Dorsolateral prefrontal cortex (tissue), 120 donors: ENCODE measurements at regions of chr3 and their contacts with region 1.

Region 1: DNA sequence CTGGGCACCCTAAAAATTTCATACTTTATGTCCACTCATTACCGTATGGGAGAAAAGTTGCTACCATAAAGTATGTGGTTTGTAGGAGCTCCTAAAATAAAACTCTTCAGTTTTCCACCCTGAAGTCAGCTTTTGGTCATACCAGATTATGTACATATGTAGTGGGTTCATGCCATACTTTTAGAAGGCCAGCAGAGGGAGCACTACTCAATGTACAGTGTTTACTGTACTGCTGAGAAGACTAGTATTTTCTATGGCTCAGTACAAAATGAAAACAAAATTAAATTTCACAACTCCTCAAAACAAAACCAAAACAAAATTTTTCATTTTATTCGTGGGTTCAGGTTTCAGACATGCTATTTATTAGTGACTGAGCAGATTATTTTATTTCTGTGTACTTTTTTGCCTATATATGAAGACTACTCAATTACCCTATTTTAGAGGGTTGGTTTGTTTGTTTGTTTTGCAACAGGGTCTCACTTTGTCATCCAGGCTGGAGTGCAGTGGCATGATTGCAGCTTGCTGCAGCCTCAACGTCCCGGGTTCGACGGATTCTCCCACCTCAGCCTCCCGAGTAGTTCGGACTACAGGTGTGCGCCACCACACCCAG is 24.3 kb downstream of the NXPE3 start:
- DNase-seq: peak in 3 of 10 donors; percentile 54 to 69 (median 60)
- H3K4me3 ChIP-seq: no peak overlapping the region
- H3K27ac ChIP-seq: peak overlapping the region in 30 of 59 donors; percentile 3 to 86 (median 50)
- H3K27me3 ChIP-seq: no peaks in the 10 kb centered on the region
- CTCF ChIP-seq: peak; percentile 69 to 95 (median 85)

Region 2: GRCh38 chr3:101724329-101725193 is 78.7 kb before region 1 on chr3 and contains the start of gene CEP97:
- intact Hi-C with region 1: loop called in 1 of 2 experiments (anchors 2 kb)
- DNase-seq: peak; percentile 86 to 98 (median 94)
- H3K4me3 ChIP-seq: peak within 1 kb of the TSS; percentile 67 to 100 (median 88)
- H3K27ac ChIP-seq: peak within 1 kb of the TSS; percentile 12 to 100 (median 95)
- H3K27me3 ChIP-seq: no peaks in the 10 kb centered on the region
- CTCF ChIP-seq: peak in 29 of 56 donors; percentile 4 to 54 (median 23)
- total RNA-seq, gene CEP97: 19.1 to 55.5 (median 35.0) TPM

Region 3: DNA sequence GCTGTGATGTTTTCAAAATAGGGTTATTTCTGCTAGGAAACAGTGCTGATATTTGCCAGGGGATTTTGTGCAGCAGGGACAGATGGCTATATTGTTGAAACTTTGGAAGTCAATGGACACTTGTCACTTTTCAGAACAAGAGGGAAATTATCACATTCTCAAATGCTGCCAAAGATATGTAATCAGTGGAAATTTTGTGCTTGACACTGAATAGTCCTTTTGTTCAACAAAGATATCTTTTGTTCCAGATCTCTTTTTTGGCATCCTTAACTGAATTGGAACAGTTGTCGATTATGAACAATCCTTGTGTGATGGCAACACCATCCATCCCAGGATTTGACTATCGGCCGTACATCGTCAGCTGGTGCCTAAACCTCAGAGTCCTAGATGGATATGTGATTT is 71.0 kb before region 1 on chr3:
- intact Hi-C with region 1: loop called in 1 of 2 experiments (anchors 5 kb)
- DNase-seq: peak in 3 of 10 donors; percentile 24 to 63 (median 46)
- H3K4me3 ChIP-seq: peak overlapping the region in 7 of 59 donors; percentile 1 to 30 (median 12)
- H3K27ac ChIP-seq: peak overlapping the region; percentile 12 to 100 (median 95)
- H3K27me3 ChIP-seq: no peaks in the 10 kb centered on the region
- CTCF ChIP-seq: peak in 5 of 56 donors; percentile 12 to 27 (median 16)